CD4-positive, alpha-beta T cell (primary cell): ENCODE measurements at regions of chr11 and their contacts with region 1.

Region 1: GRCh38 chr11:46050003-46050461 is 71.2 kb downstream of the PHF21A start:
- DNase-seq: no peak
- ATAC-seq: no peak
- H3K4me3 ChIP-seq: no peak overlapping the region
- H3K4me3 Mint-ChIP-seq: no peak overlapping the region
- H3K27ac ChIP-seq: no peak overlapping the region
- H3K27ac Mint-ChIP-seq: no peak overlapping the region
- H3K4me1 ChIP-seq: no peaks in the 10 kb centered on the region
- H3K4me1 Mint-ChIP-seq: peaks cover 18% of the 10 kb centered on the region
- H3K27me3 ChIP-seq: no peaks in the 10 kb centered on the region
- H3K27me3 Mint-ChIP-seq: no peaks in the 10 kb centered on the region
- CTCF ChIP-seq: no peak

Region 2: GRCh38 chr11:46322759-46323158 is 272.7 kb after region 1 on chr11:
- CTCF ChIA-PET with region 1: no interaction called
- POLR2A ChIA-PET with region 1: no interaction called
- intact Hi-C with region 1: no loop called
- DNase-seq: no peak
- ATAC-seq: no peak
- H3K4me3 ChIP-seq: no peak overlapping the region
- H3K4me3 Mint-ChIP-seq: no peak overlapping the region
- H3K27ac ChIP-seq: no peak overlapping the region
- H3K27ac Mint-ChIP-seq: no peak overlapping the region
- H3K4me1 ChIP-seq: peaks cover 19% of the 10 kb centered on the region
- H3K4me1 Mint-ChIP-seq: peaks cover 37% of the 10 kb centered on the region
- H3K27me3 ChIP-seq: no peaks in the 10 kb centered on the region
- H3K27me3 Mint-ChIP-seq: no peaks in the 10 kb centered on the region
- CTCF ChIP-seq: no peak

Region 3: GRCh38 chr11:47879259-47880158 is 1829.5 kb after region 1 on chr11:
- CTCF ChIA-PET with region 1: no interaction called
- POLR2A ChIA-PET with region 1: no interaction called
- intact Hi-C with region 1: loop called in 1 of 2 experiments (anchors 10 kb)
- DNase-seq: no peak
- ATAC-seq: no peak
- H3K4me3 ChIP-seq: no peak overlapping the region
- H3K4me3 Mint-ChIP-seq: no peak overlapping the region
- H3K27ac ChIP-seq: no peak overlapping the region
- H3K27ac Mint-ChIP-seq: no peak overlapping the region
- H3K4me1 ChIP-seq: peaks cover 3% of the 10 kb centered on the region
- H3K4me1 Mint-ChIP-seq: peaks cover 7% of the 10 kb centered on the region
- H3K27me3 ChIP-seq: no peaks in the 10 kb centered on the region
- H3K27me3 Mint-ChIP-seq: no peaks in the 10 kb centered on the region
- CTCF ChIP-seq: no peak